HEK293T (cell line): ENCODE measurements at regions of chr6 and their contacts with region 1.

Region 1: DNA sequence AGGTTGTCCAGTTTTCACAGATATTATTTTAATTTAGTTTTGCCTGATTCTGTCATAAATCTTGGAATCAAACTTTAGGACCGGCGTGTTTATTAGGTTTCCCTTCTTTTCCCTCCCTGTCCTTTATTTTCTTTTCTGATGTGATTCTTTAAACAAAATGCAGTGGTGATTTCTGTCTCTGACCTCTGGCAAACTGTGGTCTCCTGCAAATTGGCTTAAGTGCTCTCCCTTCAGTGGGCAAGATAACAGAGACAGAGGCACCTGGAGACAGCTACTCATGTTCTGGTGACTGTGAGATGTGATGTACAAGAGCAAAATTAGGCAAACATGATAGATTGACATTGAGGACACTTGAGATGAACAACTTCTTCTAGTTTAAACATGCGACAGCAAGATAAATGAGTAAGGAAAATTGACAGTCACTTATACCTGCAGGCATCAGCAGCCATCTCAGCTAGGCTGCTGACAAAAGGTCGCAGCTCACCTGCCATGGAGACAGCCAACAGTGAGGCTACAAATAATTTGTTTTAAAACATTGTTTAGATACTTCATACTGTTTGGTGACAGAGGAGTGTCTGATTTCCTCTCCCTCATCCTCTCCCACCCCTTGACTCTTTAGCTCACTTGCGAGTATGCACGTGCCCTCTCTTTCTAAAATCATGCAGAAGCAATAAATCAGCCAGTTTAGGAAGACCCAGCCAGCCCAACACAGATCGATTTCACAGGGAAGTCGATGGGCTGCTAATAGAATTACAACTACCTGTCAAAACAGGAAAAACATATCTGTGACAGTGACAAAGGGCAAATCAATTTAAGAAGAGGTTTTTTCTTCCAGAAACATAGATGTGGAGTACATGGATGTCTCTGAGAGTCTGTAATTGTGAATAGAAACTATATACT is 63.4 kb upstream of the MAP3K7 start:
- DNase-seq: peak; percentile 38

Region 2: DNA sequence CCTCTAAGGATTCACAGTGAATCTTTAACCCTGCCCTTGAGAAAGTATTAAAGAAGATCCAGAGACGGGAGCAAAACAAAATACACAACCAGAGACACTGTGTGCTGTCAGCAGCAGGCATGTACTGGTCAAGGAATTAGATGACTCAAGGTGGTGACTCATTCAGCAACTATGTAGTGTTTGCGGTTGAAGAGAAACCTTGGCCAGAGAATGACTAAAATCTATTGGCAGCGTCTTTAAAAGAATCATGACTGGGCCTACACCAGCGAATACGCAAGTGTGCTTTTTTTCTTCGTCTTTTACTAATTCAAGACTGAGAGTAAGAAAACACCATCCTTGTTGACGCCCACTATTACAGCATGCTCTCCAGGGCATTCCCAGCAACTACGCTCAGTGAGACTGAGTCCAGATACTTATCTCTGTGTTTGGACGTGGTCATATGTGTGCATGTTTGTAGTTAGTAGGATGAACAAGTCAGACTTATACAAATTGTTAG is 281.2 kb before region 1 on chr6:
- CTCF ChIA-PET with region 1: no interaction called
- POLR2A ChIA-PET with region 1: no interaction called
- DNase-seq: peak; percentile 55

Region 3: GRCh38 chr6:90610751-90611542 is 39.3 kb before region 1 on chr6:
- CTCF ChIA-PET with region 1: interaction called, 3 read pairs
- POLR2A ChIA-PET with region 1: interaction called, 10 read pairs
- DNase-seq: peak; percentile 53

Region 4: GRCh38 chr6:90701146-90701781 is 51.0 kb after region 1 on chr6:
- CTCF ChIA-PET with region 1: no interaction called
- POLR2A ChIA-PET with region 1: no interaction called
- DNase-seq: peak; percentile 55